Activated CD4-positive, alpha-beta T cell treated with anti-CD3 and anti-CD28 coated beads, Interleukin-2, amount 10 ng/mL, durations not matched to agents 24 days and 14 days (primary cell): ENCODE measurements at regions of chr16 and their contacts with region 1.

Region 1: DNA sequence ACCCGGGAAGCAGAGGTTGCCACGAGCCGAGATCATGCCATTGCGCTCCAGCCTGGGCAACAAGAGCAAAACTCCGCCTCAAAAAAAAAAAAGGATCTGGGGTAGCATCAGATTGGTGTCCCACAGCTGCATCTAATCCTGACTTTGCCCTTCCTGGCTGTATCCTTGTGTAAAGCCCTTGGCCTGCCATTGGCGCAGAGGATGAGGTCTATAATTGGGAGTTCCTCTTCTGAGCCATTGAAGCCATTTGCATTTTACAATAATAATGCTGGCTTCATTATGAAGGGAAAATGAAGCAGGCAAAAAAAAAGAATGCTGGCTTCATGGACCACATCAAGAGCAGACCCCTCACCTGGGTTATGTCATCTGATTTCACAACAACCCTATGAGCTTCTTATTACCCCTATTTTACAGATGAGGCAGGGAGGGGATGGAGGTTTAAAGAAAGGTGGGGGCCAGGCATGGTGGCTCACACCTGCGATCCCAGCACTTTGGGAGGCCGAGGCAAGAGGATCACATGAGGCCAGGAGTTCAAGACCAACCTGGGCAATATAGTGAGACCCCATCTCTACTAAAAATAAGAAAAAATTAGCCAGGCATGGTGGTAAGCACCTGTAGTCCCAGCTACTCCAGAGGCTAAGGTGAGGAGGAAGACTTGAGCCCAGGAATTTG is 1.2 kb upstream of the LITAFD start:
- DNase-seq: no peak
- H3K4me3 Mint-ChIP-seq: no peak overlapping the region
- H3K27ac Mint-ChIP-seq: no peak overlapping the region
- H3K4me1 Mint-ChIP-seq: peaks cover 4% of the 10 kb centered on the region
- H3K27me3 Mint-ChIP-seq: peaks cover 2% of the 10 kb centered on the region

Region 2: GRCh38 chr16:8655184-8655717 is 225.7 kb before region 1 on chr16:
- intact Hi-C with region 1: loop called (anchors 1 kb)
- DNase-seq: peak; percentile 81
- H3K4me3 Mint-ChIP-seq: no peak overlapping the region
- H3K27ac Mint-ChIP-seq: no peak overlapping the region
- H3K4me1 Mint-ChIP-seq: peaks cover 6% of the 10 kb centered on the region
- H3K27me3 Mint-ChIP-seq: no peaks in the 10 kb centered on the region

Region 3: DNA sequence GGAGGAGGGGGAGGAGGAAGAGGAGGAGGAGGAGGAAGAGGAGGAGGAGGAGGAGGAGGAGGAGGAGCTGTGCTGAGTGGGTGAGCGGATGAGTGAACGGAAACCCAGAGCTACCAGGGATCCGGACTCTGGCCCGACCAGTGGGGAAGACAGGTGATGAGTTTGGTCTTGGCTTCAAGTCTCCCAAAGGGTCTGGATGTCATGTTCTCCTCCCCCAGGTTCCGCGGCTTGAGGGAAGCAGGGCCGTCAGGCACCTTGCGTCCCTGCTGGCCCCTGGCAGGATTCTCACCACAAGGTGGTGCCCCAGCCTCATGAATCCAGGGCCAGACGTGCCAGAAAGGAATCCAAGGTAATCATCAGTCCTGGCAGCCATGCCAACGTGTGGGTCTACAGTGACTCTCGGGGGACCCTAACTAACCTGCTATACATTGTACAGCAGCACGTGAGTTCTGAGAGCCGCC is 220.1 kb before region 1 on chr16:
- intact Hi-C with region 1: loop called (anchors 1 kb)
- DNase-seq: peak; percentile 90
- H3K4me3 Mint-ChIP-seq: no peak overlapping the region
- H3K27ac Mint-ChIP-seq: no peak overlapping the region
- H3K4me1 Mint-ChIP-seq: peaks cover 3% of the 10 kb centered on the region
- H3K27me3 Mint-ChIP-seq: no peaks in the 10 kb centered on the region

Region 4: GRCh38 chr16:8819411-8820034 is 61.5 kb before region 1 on chr16:
- intact Hi-C with region 1: loop called (anchors 2 kb)
- DNase-seq: no peak
- H3K4me3 Mint-ChIP-seq: no peak overlapping the region
- H3K27ac Mint-ChIP-seq: no peak overlapping the region
- H3K4me1 Mint-ChIP-seq: peaks cover 22% of the 10 kb centered on the region
- H3K27me3 Mint-ChIP-seq: no peaks in the 10 kb centered on the region

Region 5: DNA sequence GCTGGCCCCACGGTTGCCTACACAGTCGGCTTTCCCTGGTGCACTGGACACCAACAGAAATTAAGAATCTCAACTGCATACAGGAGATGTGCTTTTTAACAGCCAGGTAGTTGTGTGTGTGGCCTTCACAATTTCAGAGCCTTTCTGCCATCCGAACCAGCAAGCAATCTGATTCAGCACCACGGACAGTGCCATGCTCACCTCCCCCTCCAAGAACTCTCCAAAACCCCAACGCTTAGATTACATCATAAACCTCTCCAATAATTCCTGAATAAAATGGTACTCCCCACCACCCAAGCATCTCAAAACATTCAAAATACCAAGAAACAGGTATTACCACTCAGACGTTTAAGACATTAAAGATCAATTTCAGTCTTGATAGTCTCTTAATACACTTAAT is 50.9 kb after region 1 on chr16:
- intact Hi-C with region 1: no loop called
- DNase-seq: peak; percentile 83
- H3K4me3 Mint-ChIP-seq: no peak overlapping the region
- H3K27ac Mint-ChIP-seq: no peak overlapping the region
- H3K4me1 Mint-ChIP-seq: peaks cover 35% of the 10 kb centered on the region
- H3K27me3 Mint-ChIP-seq: no peaks in the 10 kb centered on the region

Region 6: GRCh38 chr16:9107025-9107970 is 226.3 kb after region 1 on chr16:
- intact Hi-C with region 1: no loop called
- DNase-seq: no peak
- H3K4me3 Mint-ChIP-seq: peak overlapping the region; percentile 4
- H3K27ac Mint-ChIP-seq: peak overlapping the region; percentile 36
- H3K4me1 Mint-ChIP-seq: peaks cover 62% of the 10 kb centered on the region
- H3K27me3 Mint-ChIP-seq: no peaks in the 10 kb centered on the region